Naive thymus-derived CD4-positive, alpha-beta T cell (primary cell): ENCODE measurements at regions of chr2 and their contacts with region 1.

Region 1: GRCh38 chr2:203871371-203871983 is 3.9 kb downstream of the CTLA4 start:
- DNase-seq: peak in 1 of 9 donors; percentile 45
- ATAC-seq: peak; percentile 30
- H3K4me3 ChIP-seq: no peak overlapping the region
- H3K4me3 Mint-ChIP-seq: peak overlapping the region; percentile 55 to 96 (median 77)
- H3K27ac ChIP-seq: peak overlapping the region; percentile 79
- H3K27ac Mint-ChIP-seq: peak overlapping the region; percentile 48 to 99 (median 92)
- H3K4me1 ChIP-seq: peaks cover 56 to 64% of the 10 kb centered on the region in 2 donors
- H3K4me1 Mint-ChIP-seq: peaks cover 44 to 93% (median 80%) of the 10 kb centered on the region in 7 donors
- H3K27me3 ChIP-seq: no peaks in the 10 kb centered on the region
- H3K27me3 Mint-ChIP-seq: no peaks in the 10 kb centered on the region

Region 2: DNA sequence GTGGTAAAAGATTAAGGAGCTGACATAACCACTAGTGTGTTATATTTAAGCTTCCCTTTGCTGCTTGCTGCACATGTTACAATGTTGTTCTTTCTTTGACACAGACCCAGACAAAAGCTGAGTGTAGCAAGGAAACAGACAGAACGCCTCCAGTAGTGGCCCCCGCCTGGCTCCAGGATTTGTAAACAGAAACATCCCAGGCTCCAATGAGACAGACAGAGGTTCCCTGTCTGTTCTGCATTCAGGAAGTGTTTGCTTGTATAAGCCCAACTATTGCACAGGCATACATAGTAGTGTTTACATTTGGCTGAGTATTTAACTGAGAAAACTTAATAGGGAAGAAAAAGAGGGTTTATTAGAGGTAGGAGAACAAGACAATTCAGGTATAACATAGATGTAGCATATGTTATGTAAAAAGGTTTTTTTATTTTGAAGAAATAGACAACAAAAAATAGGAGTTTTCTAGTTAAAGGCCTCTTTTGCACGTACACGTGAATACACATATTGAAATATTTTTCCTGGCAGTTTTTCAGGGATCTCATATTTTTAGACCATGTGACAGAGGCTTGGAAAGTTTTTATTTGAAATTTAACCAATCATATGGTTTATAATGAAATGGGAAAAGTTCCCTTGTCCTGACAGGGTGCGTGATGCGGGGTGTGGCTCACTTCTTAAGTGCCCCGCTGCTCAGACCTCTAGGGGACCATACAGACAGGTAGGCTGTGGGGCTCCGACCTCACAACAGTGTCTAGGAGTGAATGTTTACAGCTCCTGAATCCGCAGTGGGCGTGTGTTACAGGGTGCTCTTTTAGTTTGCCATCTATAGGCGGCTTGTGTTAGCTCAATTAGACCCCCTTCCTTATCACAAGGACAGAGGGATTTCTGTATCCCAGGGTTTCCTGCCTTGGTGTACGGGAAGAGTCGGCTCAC is 1376.9 kb before region 1 on chr2:
- CTCF ChIA-PET with region 1: no interaction called
- POLR2A ChIA-PET with region 1: no interaction called
- intact Hi-C with region 1: no loop called
- DNase-seq: no peak
- ATAC-seq: no peak
- H3K4me3 ChIP-seq: no peak overlapping the region
- H3K4me3 Mint-ChIP-seq: no peak overlapping the region
- H3K27ac ChIP-seq: no peak overlapping the region
- H3K27ac Mint-ChIP-seq: no peak overlapping the region
- H3K4me1 ChIP-seq: no peaks in the 10 kb centered on the region
- H3K4me1 Mint-ChIP-seq: peaks cover 0 to 3% (median 0%) of the 10 kb centered on the region in 7 donors
- H3K27me3 ChIP-seq: no peaks in the 10 kb centered on the region
- H3K27me3 Mint-ChIP-seq: no peaks in the 10 kb centered on the region

Region 3: DNA sequence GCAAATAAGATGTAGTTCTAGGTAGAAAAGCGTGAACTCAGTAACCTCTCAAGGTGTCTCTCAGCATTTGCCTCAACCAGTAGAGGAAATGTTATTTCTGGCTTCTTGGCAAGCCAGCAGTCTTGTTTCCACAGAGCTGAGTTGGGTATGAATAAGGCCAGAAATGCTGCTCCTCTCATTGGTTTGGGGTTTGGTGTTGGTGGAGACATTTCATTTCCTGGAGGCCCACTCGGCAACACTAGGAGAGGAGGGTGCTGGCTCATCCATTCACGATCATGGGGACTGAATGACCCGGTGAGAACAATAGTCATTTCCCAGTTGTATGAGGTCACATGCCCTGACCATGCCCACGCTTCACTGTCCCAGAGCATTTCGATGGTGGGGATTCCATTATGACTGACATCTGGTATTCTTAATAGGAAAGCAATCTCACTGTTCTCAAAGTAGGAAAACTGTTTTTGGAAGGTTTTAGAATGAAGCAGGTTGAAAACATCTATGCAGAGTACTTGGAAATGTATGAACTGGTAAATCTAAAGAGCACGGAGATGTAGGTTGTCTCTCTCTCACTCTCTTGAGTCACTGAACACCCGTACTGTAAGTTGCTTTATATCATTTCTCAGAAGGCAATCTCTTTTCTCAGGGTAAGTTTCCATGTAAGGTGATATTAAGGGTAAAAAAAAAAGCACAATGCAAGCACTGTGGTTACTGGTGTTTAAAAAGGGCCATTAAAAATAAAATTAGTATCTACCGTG is 41.0 kb before region 1 on chr2:
- CTCF ChIA-PET with region 1: interaction called, 3 read pairs
- POLR2A ChIA-PET with region 1: no interaction called
- intact Hi-C with region 1: loop called in 1 of 2 experiments (anchors 2 kb)
- DNase-seq: peak in 1 of 9 donors; percentile 67
- ATAC-seq: no peak
- H3K4me3 ChIP-seq: no peak overlapping the region
- H3K4me3 Mint-ChIP-seq: peak overlapping the region in 3 of 10 donors; percentile 13 to 80 (median 33)
- H3K27ac ChIP-seq: no peak overlapping the region
- H3K27ac Mint-ChIP-seq: peak overlapping the region in 3 of 9 donors; percentile 16 to 92 (median 44)
- H3K4me1 ChIP-seq: no peaks in the 10 kb centered on the region
- H3K4me1 Mint-ChIP-seq: peaks cover 0 to 16% (median 8%) of the 10 kb centered on the region in 7 donors
- H3K27me3 ChIP-seq: no peaks in the 10 kb centered on the region
- H3K27me3 Mint-ChIP-seq: no peaks in the 10 kb centered on the region

Region 4: DNA sequence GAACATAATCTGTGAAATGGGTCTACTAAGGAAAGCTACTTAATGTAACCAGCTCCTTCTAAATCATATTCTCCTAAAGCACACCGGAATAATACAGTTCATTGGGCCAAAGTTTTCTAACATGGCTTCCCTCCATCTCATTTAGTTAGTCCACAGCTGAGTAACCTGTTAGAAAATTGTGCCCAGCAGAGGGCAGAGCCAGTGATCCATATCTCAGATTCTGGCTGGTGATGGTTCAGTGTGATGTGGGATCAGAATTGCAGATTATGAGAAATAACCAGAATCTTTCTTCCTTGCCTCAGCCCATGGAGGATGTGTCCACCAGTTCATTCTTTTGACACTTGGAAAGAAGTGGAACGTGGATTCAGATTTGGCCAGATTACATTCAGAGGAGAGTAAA is 13.3 kb before region 1 on chr2:
- CTCF ChIA-PET with region 1: interaction called, 7 read pairs
- POLR2A ChIA-PET with region 1: interaction called, 79 read pairs
- intact Hi-C with region 1: loop called (anchors 2 kb)
- DNase-seq: peak in 3 of 9 donors; percentile 29 to 39 (median 38)
- ATAC-seq: peak; percentile 65
- H3K4me3 ChIP-seq: no peak overlapping the region
- H3K4me3 Mint-ChIP-seq: no peak overlapping the region
- H3K27ac ChIP-seq: no peak overlapping the region
- H3K27ac Mint-ChIP-seq: peak overlapping the region in 2 of 9 donors; percentile 77 to 87
- H3K4me1 ChIP-seq: peaks cover 3 to 5% of the 10 kb centered on the region in 2 donors
- H3K4me1 Mint-ChIP-seq: peaks cover 30 to 67% (median 48%) of the 10 kb centered on the region in 7 donors
- H3K27me3 ChIP-seq: no peaks in the 10 kb centered on the region
- H3K27me3 Mint-ChIP-seq: no peaks in the 10 kb centered on the region

Region 5: GRCh38 chr2:203887677-203888076 is 16.2 kb after region 1 on chr2:
- CTCF ChIA-PET with region 1: no interaction called
- POLR2A ChIA-PET with region 1: interaction called, 6 read pairs
- intact Hi-C with region 1: loop called (anchors 2 kb)
- DNase-seq: no peak
- ATAC-seq: no peak
- H3K4me3 ChIP-seq: no peak overlapping the region
- H3K4me3 Mint-ChIP-seq: no peak overlapping the region
- H3K27ac ChIP-seq: no peak overlapping the region
- H3K27ac Mint-ChIP-seq: no peak overlapping the region
- H3K4me1 ChIP-seq: no peaks in the 10 kb centered on the region
- H3K4me1 Mint-ChIP-seq: peaks cover 0 to 50% (median 0%) of the 10 kb centered on the region in 7 donors
- H3K27me3 ChIP-seq: no peaks in the 10 kb centered on the region
- H3K27me3 Mint-ChIP-seq: peaks cover 0 to 6% (median 0%) of the 10 kb centered on the region in 5 donors

Region 6: GRCh38 chr2:203893401-203893800 is 21.9 kb after region 1 on chr2:
- CTCF ChIA-PET with region 1: interaction called, 3 read pairs
- POLR2A ChIA-PET with region 1: interaction called, 5 read pairs
- intact Hi-C with region 1: loop called (anchors 1 to 2 kb)
- DNase-seq: no peak
- ATAC-seq: no peak
- H3K4me3 ChIP-seq: no peak overlapping the region
- H3K4me3 Mint-ChIP-seq: no peak overlapping the region
- H3K27ac ChIP-seq: no peak overlapping the region
- H3K27ac Mint-ChIP-seq: peak overlapping the region in 1 of 9 donors; percentile 77
- H3K4me1 ChIP-seq: no peaks in the 10 kb centered on the region
- H3K4me1 Mint-ChIP-seq: peaks cover 0 to 66% (median 7%) of the 10 kb centered on the region in 7 donors
- H3K27me3 ChIP-seq: no peaks in the 10 kb centered on the region
- H3K27me3 Mint-ChIP-seq: peaks cover 0 to 6% (median 0%) of the 10 kb centered on the region in 5 donors

Region 7: GRCh38 chr2:203934041-203934492 is 62.6 kb after region 1 on chr2:
- CTCF ChIA-PET with region 1: no interaction called
- POLR2A ChIA-PET with region 1: no interaction called
- intact Hi-C with region 1: loop called (anchors 1 to 2 kb)
- DNase-seq: peak in 8 of 9 donors; percentile 37 to 80 (median 60)
- ATAC-seq: peak; percentile 31
- H3K4me3 ChIP-seq: peak overlapping the region; percentile 22
- H3K4me3 Mint-ChIP-seq: peak overlapping the region; percentile 69 to 92 (median 78)
- H3K27ac ChIP-seq: peak overlapping the region; percentile 71
- H3K27ac Mint-ChIP-seq: peak overlapping the region; percentile 87 to 97 (median 93)
- H3K4me1 ChIP-seq: peaks cover 40 to 42% of the 10 kb centered on the region in 2 donors
- H3K4me1 Mint-ChIP-seq: peaks cover 33 to 68% (median 55%) of the 10 kb centered on the region in 7 donors
- H3K27me3 ChIP-seq: no peaks in the 10 kb centered on the region
- H3K27me3 Mint-ChIP-seq: no peaks in the 10 kb centered on the region

Region 8: GRCh38 chr2:204950671-204951346 is 1079.3 kb after region 1 on chr2:
- CTCF ChIA-PET with region 1: no interaction called
- POLR2A ChIA-PET with region 1: no interaction called
- intact Hi-C with region 1: loop called in 1 of 2 experiments (anchors 2 kb)
- DNase-seq: no peak
- ATAC-seq: no peak
- H3K4me3 ChIP-seq: no peak overlapping the region
- H3K4me3 Mint-ChIP-seq: peak overlapping the region in 1 of 10 donors; percentile 24
- H3K27ac ChIP-seq: no peak overlapping the region
- H3K27ac Mint-ChIP-seq: peak overlapping the region in 7 of 9 donors; percentile 27 to 84 (median 73)
- H3K4me1 ChIP-seq: peaks cover 6 to 37% of the 10 kb centered on the region in 2 donors
- H3K4me1 Mint-ChIP-seq: peaks cover 30 to 76% (median 64%) of the 10 kb centered on the region in 7 donors
- H3K27me3 ChIP-seq: no peaks in the 10 kb centered on the region
- H3K27me3 Mint-ChIP-seq: no peaks in the 10 kb centered on the region